Common myeloid progenitor, CD34-positive (primary cell): ENCODE measurements at regions of chr20 and their contacts with region 1.

Region 1: DNA sequence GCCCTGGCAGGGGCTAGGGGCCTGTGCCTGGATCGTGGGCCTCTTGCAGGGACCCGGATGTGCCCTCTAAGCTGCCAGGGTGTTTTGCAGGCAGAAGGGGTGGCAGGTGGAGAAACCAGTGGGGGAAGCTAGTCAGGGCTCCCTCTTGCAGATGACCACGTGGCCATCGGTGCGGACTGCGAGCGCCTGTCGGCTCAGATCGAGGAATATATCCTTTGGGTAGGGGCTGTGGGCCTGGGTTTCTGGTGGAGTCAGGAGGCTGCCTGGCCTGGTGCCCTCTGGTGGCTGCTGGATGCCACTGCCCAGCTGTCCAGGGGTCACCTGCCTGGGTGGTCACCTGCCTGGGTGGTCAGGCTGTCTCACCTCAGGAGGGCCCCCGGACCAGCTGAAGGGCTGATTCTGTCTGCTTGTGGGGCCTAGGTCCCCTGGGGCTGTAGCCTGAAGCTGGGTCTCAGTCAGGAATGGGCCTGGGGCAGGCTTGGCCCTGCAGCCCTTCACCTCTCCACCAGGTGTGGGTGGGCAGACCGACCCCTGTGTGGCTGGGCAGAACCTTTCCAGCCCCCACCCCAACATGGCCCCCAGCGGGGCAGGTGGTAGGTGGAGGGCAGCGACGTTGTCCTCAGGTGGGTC is 6.7 kb downstream of the TCEA2 start:
- DNase-seq: no peak
- H3K4me3 ChIP-seq: no peak overlapping the region
- H3K27ac ChIP-seq: no peak overlapping the region
- H3K4me1 ChIP-seq: peaks cover 2 to 83% (median 74%) of the 10 kb centered on the region in 4 experiments
- H3K27me3 ChIP-seq: no peaks in the 10 kb centered on the region

Region 2: DNA sequence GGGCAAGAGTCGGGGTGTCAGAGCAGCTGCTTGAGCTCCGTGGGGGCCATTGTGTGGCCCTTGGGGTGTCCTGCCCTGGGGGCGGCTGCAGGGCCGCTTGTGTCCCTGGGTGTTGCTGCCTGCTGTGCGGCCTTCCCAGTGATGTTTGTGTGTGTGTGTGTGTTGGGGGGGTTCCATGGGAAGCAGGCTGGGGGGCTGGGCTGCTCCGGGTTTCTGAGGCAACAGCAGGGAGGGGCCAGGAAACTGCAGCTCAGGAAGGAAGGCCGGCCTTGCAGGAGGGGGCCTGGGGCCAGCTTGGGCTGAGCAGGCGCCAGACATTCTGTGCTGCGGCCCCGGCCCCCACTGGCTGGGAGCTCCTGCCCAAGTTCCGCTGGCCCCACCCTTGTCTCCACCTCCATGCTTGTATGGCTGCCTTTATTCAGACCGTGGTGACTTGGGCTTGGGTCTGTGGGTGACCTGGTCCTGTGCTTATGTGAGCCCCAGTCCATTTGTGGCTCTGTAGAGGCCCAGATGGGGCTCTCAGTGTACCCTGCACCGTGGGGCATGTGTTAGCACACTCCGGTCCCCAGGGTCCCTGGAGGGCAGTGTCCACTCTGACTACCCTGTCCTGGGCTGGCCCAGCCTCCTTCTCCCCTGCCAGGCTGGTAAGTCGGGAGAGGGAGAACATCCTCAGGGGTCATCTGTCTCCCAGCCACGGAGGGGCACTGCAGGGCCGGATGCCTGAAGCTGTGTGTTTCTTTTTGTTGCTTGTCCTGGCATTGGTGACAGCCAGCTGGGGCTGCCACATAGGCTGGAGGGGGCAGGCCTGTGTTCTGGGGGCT is 15.7 kb before region 1 on chr20:
- CTCF ChIA-PET with region 1: interaction called, 37 read pairs
- POLR2A ChIA-PET with region 1: no interaction called
- DNase-seq: peak in 2 of 3 donors; percentile 51 to 52
- H3K4me3 ChIP-seq: peak overlapping the region in 5 of 7 experiments; percentile 3 to 59 (median 48)
- H3K27ac ChIP-seq: peak overlapping the region in 1 of 2 experiments; percentile 34
- H3K4me1 ChIP-seq: peaks cover 2 to 87% (median 80%) of the 10 kb centered on the region in 4 experiments
- H3K27me3 ChIP-seq: peaks cover 0 to 12% (median 0%) of the 10 kb centered on the region in 5 experiments

Region 3: GRCh38 chr20:64238851-64239387 is 169.2 kb after region 1 on chr20:
- CTCF ChIA-PET with region 1: no interaction called
- POLR2A ChIA-PET with region 1: no interaction called
- DNase-seq: no peak
- H3K4me3 ChIP-seq: no peak overlapping the region
- H3K27ac ChIP-seq: no peak overlapping the region
- H3K4me1 ChIP-seq: no peaks in the 10 kb centered on the region
- H3K27me3 ChIP-seq: no peaks in the 10 kb centered on the region